Activated CD4-positive, alpha-beta T cell treated with anti-CD3 and anti-CD28 coated beads, Interleukin-2, amount 10 ng/mL, durations not matched to agents 24 days and 14 days (primary cell): ENCODE measurements at regions of chr5 and their contacts with region 1.

Region 1: GRCh38 chr5:32261198-32261597 is 51.5 kb downstream of the MTMR12 start:
- DNase-seq: peak; percentile 61
- H3K4me3 Mint-ChIP-seq: no peak overlapping the region
- H3K27ac Mint-ChIP-seq: peak overlapping the region; percentile 64
- H3K4me1 Mint-ChIP-seq: peaks cover 16% of the 10 kb centered on the region
- H3K27me3 Mint-ChIP-seq: no peaks in the 10 kb centered on the region

Region 2: DNA sequence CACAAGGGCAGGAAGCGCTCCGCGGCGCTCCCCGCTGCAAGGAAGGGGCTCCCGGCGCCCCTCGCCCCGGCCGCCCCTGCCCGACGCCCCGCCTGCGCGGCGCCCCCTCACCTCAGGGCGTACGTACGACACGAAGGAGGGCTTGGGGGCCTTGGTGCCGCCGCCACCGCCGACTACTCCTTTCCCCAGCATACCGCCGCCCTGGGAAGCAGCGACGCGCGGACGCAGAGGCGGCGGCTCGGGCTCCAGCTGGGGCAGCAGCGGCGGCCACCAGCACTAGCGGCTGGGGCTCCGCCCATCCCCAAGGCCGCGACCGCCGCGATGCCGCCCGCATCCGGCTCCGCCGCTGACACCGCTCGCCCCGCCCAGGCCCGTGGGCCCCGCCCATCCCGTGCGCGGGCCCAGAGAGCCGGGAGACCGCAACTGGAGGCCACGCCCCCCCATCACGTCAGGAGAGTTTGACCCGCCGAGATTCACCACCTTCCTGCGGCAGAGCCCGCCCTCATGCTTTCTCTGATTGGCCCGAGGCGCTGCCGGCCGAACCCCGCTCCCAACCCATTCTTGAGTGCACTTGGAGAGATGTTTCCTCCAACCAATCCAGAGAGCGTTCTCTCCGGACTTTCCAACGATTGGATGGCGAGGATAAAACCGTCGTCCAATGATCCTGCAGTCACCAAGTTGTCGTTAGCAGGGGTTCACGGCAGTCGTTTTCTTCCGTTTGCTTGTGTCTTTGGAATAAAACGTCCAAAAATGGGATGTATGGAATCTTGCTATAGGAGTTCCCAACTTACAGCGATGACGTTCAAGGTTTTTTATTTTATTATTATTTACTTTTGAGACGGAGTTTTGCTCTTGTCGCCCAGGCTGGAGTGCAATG is 51.7 kb after region 1 on chr5 and contains the start of gene MTMR12:
- intact Hi-C with region 1: loop called (anchors 5 kb)
- DNase-seq: peak; percentile 100
- H3K4me3 Mint-ChIP-seq: peak within 1 kb of the TSS; percentile 96
- H3K27ac Mint-ChIP-seq: peak within 1 kb of the TSS; percentile 87
- H3K4me1 Mint-ChIP-seq: peaks cover 28% of the 10 kb centered on the region
- H3K27me3 Mint-ChIP-seq: no peaks in the 10 kb centered on the region
- total RNA-seq, gene MTMR12: 26.5 and 29.8 TPM in 2 replicates

Region 3: DNA sequence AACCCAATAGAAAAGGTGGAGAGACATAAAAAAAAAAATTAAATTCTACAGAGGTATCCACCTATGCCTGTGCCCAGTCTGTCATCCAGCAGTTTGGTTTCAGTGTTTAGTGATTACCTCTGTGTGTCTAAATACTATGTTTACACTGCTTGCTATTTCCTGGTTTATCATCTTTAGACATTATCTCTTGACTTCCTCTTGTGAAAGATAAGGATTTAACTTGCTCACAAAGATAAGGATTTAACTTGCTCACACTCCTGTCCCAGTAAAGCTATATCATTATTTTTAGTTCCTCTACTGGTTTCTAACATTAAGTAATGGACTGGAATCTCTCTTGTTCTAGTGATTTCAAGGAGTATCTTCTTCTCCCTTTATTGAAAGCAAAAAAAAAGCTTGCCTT is 237.3 kb after region 1 on chr5:
- intact Hi-C with region 1: no loop called
- DNase-seq: no peak
- H3K4me3 Mint-ChIP-seq: no peak overlapping the region
- H3K27ac Mint-ChIP-seq: no peak overlapping the region
- H3K4me1 Mint-ChIP-seq: peaks cover 23% of the 10 kb centered on the region
- H3K27me3 Mint-ChIP-seq: peaks cover 1% of the 10 kb centered on the region